Activated CD4-positive, alpha-beta memory T cell treated with anti-CD3 and anti-CD28 coated beads for 36 hours (primary cell): ENCODE measurements at regions of chr17 and their contacts with region 1.

Region 1: GRCh38 chr17:28057731-28058279 is 15.3 kb downstream of the NLK start:
- DNase-seq: no peak
- H3K4me3 Mint-ChIP-seq: no peak overlapping the region
- H3K27ac Mint-ChIP-seq: no peak overlapping the region
- H3K4me1 Mint-ChIP-seq: peaks cover 42% of the 10 kb centered on the region
- H3K27me3 Mint-ChIP-seq: no peaks in the 10 kb centered on the region

Region 2: DNA sequence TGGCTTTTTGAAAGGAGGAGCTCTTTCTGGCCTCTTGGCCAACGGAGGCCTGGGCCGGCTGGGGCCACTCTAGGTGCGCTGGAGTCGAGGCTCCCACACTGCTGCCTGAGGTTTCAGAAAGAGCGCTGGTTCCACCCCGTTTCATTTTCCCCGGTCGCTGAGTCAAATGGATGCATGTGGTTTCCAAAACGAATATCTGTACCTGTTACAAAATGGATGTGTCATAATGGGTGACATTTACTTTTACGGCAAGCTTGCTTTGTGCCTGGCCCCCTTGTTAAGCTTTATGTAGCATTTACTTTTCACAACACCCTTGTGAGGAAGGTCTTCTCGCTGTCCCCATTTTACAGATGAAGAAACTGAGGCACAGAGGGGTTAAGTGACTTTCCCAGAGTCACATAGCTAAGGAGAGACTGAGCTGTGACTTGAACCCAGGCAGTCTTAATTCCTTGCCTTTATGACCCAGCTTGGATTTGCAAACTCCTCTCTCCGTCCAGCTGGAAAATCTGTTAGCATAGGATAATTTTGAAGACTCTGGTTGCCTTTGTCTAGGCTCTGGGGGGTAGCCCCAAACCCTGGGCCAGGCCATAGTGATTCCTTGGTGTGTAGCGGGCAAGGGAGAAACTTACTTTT is 590.9 kb before region 1 on chr17:
- CTCF ChIA-PET with region 1: no interaction called
- POLR2A ChIA-PET with region 1: no interaction called
- intact Hi-C with region 1: loop called (anchors 5 kb)
- DNase-seq: peak; percentile 93
- H3K4me3 Mint-ChIP-seq: peak overlapping the region; percentile 68
- H3K27ac Mint-ChIP-seq: peak overlapping the region; percentile 90
- H3K4me1 Mint-ChIP-seq: peaks cover 91% of the 10 kb centered on the region
- H3K27me3 Mint-ChIP-seq: no peaks in the 10 kb centered on the region

Region 3: DNA sequence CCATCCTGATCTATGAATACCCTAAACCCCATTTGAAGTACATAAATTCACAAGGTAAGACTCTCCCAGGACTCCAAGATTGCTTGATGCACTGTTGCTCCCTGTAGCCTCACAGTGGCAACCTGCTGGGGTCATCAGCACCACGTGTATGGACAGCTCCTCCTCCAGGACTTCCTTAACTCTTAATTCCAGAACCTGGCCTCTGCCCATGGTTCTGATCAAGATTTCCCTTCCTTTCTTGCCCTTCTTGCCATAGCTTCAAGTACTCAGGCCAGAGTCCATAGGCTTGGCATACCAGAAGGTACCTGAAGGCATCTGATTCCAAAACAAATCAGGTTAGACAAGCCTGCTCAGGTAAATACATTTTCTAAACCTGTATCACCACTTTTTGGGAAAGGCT is 49.3 kb before region 1 on chr17:
- CTCF ChIA-PET with region 1: no interaction called
- POLR2A ChIA-PET with region 1: no interaction called
- intact Hi-C with region 1: no loop called
- DNase-seq: peak; percentile 13
- H3K4me3 Mint-ChIP-seq: no peak overlapping the region
- H3K27ac Mint-ChIP-seq: no peak overlapping the region
- H3K4me1 Mint-ChIP-seq: no peaks in the 10 kb centered on the region
- H3K27me3 Mint-ChIP-seq: peaks cover 4% of the 10 kb centered on the region

Region 4: GRCh38 chr17:28030386-28030785 is 27.4 kb before region 1 on chr17:
- CTCF ChIA-PET with region 1: no interaction called
- POLR2A ChIA-PET with region 1: no interaction called
- intact Hi-C with region 1: no loop called
- DNase-seq: no peak
- H3K4me3 Mint-ChIP-seq: no peak overlapping the region
- H3K27ac Mint-ChIP-seq: no peak overlapping the region
- H3K4me1 Mint-ChIP-seq: no peaks in the 10 kb centered on the region
- H3K27me3 Mint-ChIP-seq: no peaks in the 10 kb centered on the region

Region 5: DNA sequence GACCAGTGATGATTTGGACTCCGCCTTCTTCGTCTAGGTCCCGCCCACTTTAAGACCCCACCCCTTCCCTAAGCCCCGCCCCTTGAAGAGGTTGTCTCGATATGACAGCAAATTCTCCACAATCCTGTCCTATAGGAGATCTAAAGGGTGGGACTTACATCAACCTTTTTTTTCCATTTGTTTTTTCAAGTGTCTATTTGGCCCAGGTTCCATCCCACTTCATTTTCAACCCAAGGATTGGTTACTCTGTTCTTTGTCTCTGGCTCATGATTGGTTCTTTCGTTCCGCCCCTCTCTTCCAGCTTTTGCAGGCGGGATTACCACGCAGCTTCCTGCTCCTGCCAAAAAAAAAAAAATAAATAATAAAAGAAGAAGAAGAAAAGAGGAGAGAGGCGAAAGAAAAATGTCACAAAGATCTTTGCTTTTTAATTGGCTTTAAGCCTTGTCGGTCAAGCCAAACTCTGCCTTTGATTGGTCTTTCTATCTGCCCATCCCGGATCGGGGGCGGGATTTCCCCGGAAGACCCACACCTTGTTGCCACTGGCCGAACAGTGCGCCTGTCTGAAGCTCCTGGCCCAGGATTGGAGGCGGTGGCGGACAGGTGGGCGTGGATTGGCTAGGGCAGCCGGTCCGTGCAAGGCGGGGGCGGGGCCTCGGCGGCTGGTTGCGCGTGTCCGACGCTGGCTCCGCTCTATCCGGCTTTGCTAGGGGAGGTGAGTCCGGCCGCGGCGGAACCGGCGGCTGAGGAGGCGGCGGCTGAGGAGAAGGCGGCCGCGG is 16.5 kb before region 1 on chr17:
- CTCF ChIA-PET with region 1: interaction called, 6 read pairs
- POLR2A ChIA-PET with region 1: interaction called, 6 read pairs
- intact Hi-C with region 1: loop called (anchors 1 kb)
- DNase-seq: peak; percentile 100
- H3K4me3 Mint-ChIP-seq: peak overlapping the region; percentile 71
- H3K27ac Mint-ChIP-seq: peak overlapping the region; percentile 60
- H3K4me1 Mint-ChIP-seq: peaks cover 48% of the 10 kb centered on the region
- H3K27me3 Mint-ChIP-seq: no peaks in the 10 kb centered on the region

Region 6: GRCh38 chr17:28071891-28072606 is 14.2 kb after region 1 on chr17:
- CTCF ChIA-PET with region 1: interaction called, 3 read pairs
- POLR2A ChIA-PET with region 1: interaction called, 4 read pairs
- intact Hi-C with region 1: loop called (anchors 2 kb)
- DNase-seq: no peak
- H3K4me3 Mint-ChIP-seq: no peak overlapping the region
- H3K27ac Mint-ChIP-seq: no peak overlapping the region
- H3K4me1 Mint-ChIP-seq: peaks cover 45% of the 10 kb centered on the region
- H3K27me3 Mint-ChIP-seq: no peaks in the 10 kb centered on the region